PC-3 (cell line): ENCODE measurements at regions of chr2 and their contacts with region 1.

Region 1: GRCh38 chr2:11344342-11344955 is at the start of gene ROCK2:
- DNase-seq: peak; percentile 80
- ATAC-seq: peak; percentile 53
- H3K4me3 ChIP-seq: peak within 1 kb of the TSS; percentile 95
- H3K27ac ChIP-seq: peak within 1 kb of the TSS; percentile 98
- H3K4me1 ChIP-seq: peaks cover 47% of the 10 kb centered on the region
- H3K27me3 ChIP-seq: no peaks in the 10 kb centered on the region
- CTCF ChIP-seq: no peak
- total RNA-seq, gene ROCK2: 35.3 and 40.7 TPM in 2 replicates

Region 2: GRCh38 chr2:11112870-11113452 is 231.5 kb before region 1 on chr2:
- CTCF ChIA-PET with region 1: no interaction called
- POLR2A ChIA-PET with region 1: no interaction called
- intact Hi-C with region 1: no loop called
- DNase-seq: no peak
- ATAC-seq: no peak
- H3K4me3 ChIP-seq: no peak overlapping the region
- H3K27ac ChIP-seq: no peak overlapping the region
- H3K4me1 ChIP-seq: peaks cover 4% of the 10 kb centered on the region; the same call in 1 of the 2 replicates
- H3K27me3 ChIP-seq: no peaks in the 10 kb centered on the region
- CTCF ChIP-seq: no peak

Region 3: GRCh38 chr2:11234309-11234708 is 110.1 kb before region 1 on chr2:
- CTCF ChIA-PET with region 1: no interaction called
- POLR2A ChIA-PET with region 1: interaction called, 4 read pairs
- intact Hi-C with region 1: loop called (anchors 2 kb)
- DNase-seq: peak; percentile 40
- ATAC-seq: peak; percentile 42
- H3K4me3 ChIP-seq: no peak overlapping the region
- H3K27ac ChIP-seq: no peak overlapping the region
- H3K4me1 ChIP-seq: no peaks in the 10 kb centered on the region
- H3K27me3 ChIP-seq: no peaks in the 10 kb centered on the region
- CTCF ChIP-seq: peak; percentile 84

Region 4: GRCh38 chr2:11329781-11330180 is 14.7 kb before region 1 on chr2:
- CTCF ChIA-PET with region 1: no interaction called
- POLR2A ChIA-PET with region 1: interaction called, 10 read pairs
- intact Hi-C with region 1: no loop called
- DNase-seq: peak; percentile 55
- ATAC-seq: peak; percentile 66
- H3K4me3 ChIP-seq: no peak overlapping the region
- H3K27ac ChIP-seq: no peak overlapping the region
- H3K4me1 ChIP-seq: peaks cover 17% of the 10 kb centered on the region
- H3K27me3 ChIP-seq: no peaks in the 10 kb centered on the region
- CTCF ChIP-seq: no peak

Region 5: DNA sequence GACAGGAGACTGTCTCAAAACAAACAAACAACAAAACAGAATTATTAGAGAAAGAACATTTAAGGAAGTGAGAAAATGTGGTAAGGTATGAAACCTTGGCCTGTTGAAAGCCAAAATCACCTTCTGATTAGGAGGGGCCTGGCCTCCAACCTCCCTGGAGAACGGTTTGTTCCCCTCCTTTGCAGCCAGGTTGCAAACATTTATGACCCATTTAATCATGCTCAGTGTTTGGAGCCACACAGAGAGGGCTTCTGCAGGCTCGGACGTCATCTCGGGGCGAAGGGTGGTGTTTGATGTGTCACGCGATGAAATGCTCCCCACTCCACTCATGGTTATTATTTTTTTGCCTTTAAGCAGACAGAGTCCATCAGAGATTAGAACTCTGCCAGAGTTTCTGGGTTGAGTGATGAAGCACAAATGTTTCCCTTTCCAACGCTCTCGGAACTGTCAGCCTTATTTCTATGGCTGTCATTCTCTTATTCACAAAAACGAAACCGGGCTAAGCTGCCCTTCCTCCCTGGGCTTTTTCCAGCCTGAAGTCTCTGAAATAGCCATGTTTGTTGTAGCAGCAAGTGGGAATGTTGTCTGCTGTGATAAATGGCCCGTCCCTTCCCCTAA is 33.6 kb after region 1 on chr2:
- CTCF ChIA-PET with region 1: interaction called, 19 read pairs
- POLR2A ChIA-PET with region 1: interaction called, 43 read pairs
- intact Hi-C with region 1: loop called (anchors 1 kb)
- DNase-seq: no peak
- ATAC-seq: no peak
- H3K4me3 ChIP-seq: no peak overlapping the region
- H3K27ac ChIP-seq: no peak overlapping the region
- H3K4me1 ChIP-seq: peaks cover 24% of the 10 kb centered on the region
- H3K27me3 ChIP-seq: no peaks in the 10 kb centered on the region
- CTCF ChIP-seq: no peak

Region 6: GRCh38 chr2:11411768-11412448 is 67.5 kb after region 1 on chr2:
- CTCF ChIA-PET with region 1: interaction called, 7 read pairs
- POLR2A ChIA-PET with region 1: interaction called, 3 read pairs
- intact Hi-C with region 1: loop called (anchors 1 kb)
- DNase-seq: peak; percentile 71
- ATAC-seq: peak; percentile 55
- H3K4me3 ChIP-seq: peak overlapping the region; percentile 60
- H3K27ac ChIP-seq: no peak overlapping the region
- H3K4me1 ChIP-seq: peaks cover 14% of the 10 kb centered on the region
- H3K27me3 ChIP-seq: no peaks in the 10 kb centered on the region
- CTCF ChIP-seq: peak; percentile 93